Colonic mucosa (tissue), 4 donors: ENCODE measurements at regions of chr2 and their contacts with region 1.

Region 1: GRCh38 chr2:106104332-106105062 is 89.6 kb downstream of the UXS1 start:
- DNase-seq: peak; percentile 62
- H3K4me3 ChIP-seq: no peak overlapping the region
- H3K27ac ChIP-seq: no peak overlapping the region
- H3K4me1 ChIP-seq: no peaks in the 10 kb centered on the region
- H3K27me3 ChIP-seq: no peaks in the 10 kb centered on the region
- CTCF ChIP-seq: peak; percentile 87

Region 2: GRCh38 chr2:106189764-106190468 is 85.4 kb after region 1 on chr2:
- intact Hi-C with region 1: no loop called
- DNase-seq: no peak
- H3K4me3 ChIP-seq: no peak overlapping the region
- H3K27ac ChIP-seq: no peak overlapping the region
- H3K4me1 ChIP-seq: no peaks in the 10 kb centered on the region
- H3K27me3 ChIP-seq: no peaks in the 10 kb centered on the region
- CTCF ChIP-seq: no peak

Region 3: GRCh38 chr2:106542811-106543259 is 438.3 kb after region 1 on chr2:
- intact Hi-C with region 1: loop called (anchors 5 kb)
- DNase-seq: peak; percentile 80
- H3K4me3 ChIP-seq: peak overlapping the region; percentile 19
- H3K27ac ChIP-seq: no peak overlapping the region
- H3K4me1 ChIP-seq: no peaks in the 10 kb centered on the region
- H3K27me3 ChIP-seq: no peaks in the 10 kb centered on the region
- CTCF ChIP-seq: peak; percentile 94

Region 4: GRCh38 chr2:106582148-106583143 is 477.9 kb after region 1 on chr2:
- intact Hi-C with region 1: loop called (anchors 5 kb)
- DNase-seq: peak; percentile 80
- H3K4me3 ChIP-seq: peak overlapping the region; percentile 21
- H3K27ac ChIP-seq: no peak overlapping the region
- H3K4me1 ChIP-seq: no peaks in the 10 kb centered on the region
- H3K27me3 ChIP-seq: no peaks in the 10 kb centered on the region
- CTCF ChIP-seq: peak; percentile 79

Region 5: GRCh38 chr2:106642679-106643078 is 538.2 kb after region 1 on chr2:
- intact Hi-C with region 1: no loop called
- DNase-seq: no peak
- H3K4me3 ChIP-seq: no peak overlapping the region
- H3K27ac ChIP-seq: no peak overlapping the region
- H3K4me1 ChIP-seq: no peaks in the 10 kb centered on the region
- H3K27me3 ChIP-seq: no peaks in the 10 kb centered on the region
- CTCF ChIP-seq: no peak